Breast epithelium (tissue), 4 donors: ENCODE measurements at regions of chr18 and their contacts with region 1.

Region 1: GRCh38 chr18:6598657-6599056 is 130.9 kb upstream of the ARHGAP28 start:
- DNase-seq: no peak
- H3K4me3 ChIP-seq: no peak overlapping the region
- H3K27ac ChIP-seq: no peak overlapping the region
- H3K4me1 ChIP-seq: no peaks in the 10 kb centered on the region
- H3K27me3 ChIP-seq: no peaks in the 10 kb centered on the region
- CTCF ChIP-seq: no peak
- POLR2A ChIP-seq: no peak

Region 2: DNA sequence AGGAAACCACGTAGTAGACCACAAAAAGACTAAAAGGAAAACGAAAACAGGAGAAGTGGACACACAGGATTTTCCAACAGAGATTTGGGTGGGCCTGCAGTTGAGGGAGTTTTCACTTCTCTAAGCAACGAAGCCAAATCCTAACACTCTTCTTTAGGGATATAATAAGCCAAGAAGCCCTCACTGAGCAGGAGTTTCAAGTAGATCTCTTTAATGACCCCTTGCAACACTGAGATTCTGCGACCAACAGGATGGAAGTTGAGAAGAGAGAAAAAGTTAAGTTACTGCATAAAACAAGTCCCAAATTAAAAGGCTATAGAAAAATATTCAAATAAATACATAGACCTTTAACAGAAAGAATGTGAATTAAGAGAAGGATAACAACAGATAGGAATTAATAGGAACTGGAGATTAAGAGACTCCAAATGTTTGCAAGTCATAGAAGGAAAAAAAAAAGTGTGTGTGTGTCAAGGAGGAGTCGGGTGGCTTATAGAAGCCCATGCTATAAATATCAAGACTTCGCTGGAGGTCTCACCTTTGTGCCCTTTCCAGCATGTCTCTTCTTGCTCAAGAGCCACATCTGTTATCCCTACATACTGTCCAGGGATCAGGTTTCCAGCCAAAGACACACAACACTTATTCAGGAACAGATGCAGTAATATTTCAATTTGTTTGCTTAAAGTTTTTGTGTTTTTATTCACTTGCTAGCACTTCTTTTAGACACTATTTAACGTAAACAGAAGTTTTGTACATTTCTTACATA is 61.5 kb after region 1 on chr18:
- intact Hi-C with region 1: loop called (anchors 2 kb)
- DNase-seq: no peak
- H3K4me3 ChIP-seq: no peak overlapping the region
- H3K27ac ChIP-seq: no peak overlapping the region
- H3K4me1 ChIP-seq: no peaks in the 10 kb centered on the region
- H3K27me3 ChIP-seq: no peaks in the 10 kb centered on the region
- CTCF ChIP-seq: no peak
- POLR2A ChIP-seq: no peak

Region 3: GRCh38 chr18:7840411-7840810 is 1241.8 kb after region 1 on chr18:
- intact Hi-C with region 1: no loop called
- DNase-seq: no peak
- H3K4me3 ChIP-seq: no peak overlapping the region
- H3K27ac ChIP-seq: no peak overlapping the region
- H3K4me1 ChIP-seq: no peaks in the 10 kb centered on the region
- H3K27me3 ChIP-seq: no peaks in the 10 kb centered on the region
- CTCF ChIP-seq: no peak
- POLR2A ChIP-seq: no peak